ENCODE measurements at regions of chr10 and their contacts with region 1.

Region 1: DNA sequence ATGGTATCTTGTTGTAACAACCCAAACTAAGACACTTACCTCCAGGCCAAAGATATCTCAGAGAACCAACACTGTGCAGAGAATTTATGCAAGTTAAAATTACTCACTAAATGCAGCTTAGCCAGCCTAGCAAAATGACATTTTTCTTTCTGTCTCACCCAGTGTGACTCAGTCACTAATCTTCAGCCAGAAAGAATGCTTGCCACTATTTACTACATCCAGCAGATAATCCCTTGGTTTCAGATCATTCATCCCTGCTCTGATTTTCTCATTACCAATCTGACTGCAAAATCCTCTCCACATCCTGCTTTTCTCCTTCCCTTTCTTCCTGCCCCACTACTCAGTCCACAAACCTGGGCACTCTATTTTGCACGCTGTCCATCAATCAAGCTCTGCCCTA is 93.5 kb upstream of the NEBL start:
- DNase-seq: no peak
- ATAC-seq: peak in 1 of 2 experiments; percentile 22; a peak in 1 of 6 replicates
- H3K4me3 ChIP-seq: no peak overlapping the region
- H3K27ac ChIP-seq: no peak overlapping the region
- H3K4me1 ChIP-seq: peaks cover 16% of the 10 kb centered on the region; the same call in 2 of the 3 replicates
- CTCF ChIP-seq: no peak
- EP300 ChIP-seq: no peak
- POLR2A ChIP-seq: no peak
- RAD21 ChIP-seq: no peak

Region 2: GRCh38 chr10:20903635-20904390 is 86.8 kb before region 1 on chr10:
- CTCF ChIA-PET with region 1: no interaction called
- POLR2A ChIA-PET with region 1: interaction called, 10 read pairs
- DNase-seq: no peak
- ATAC-seq: no peak
- H3K4me3 ChIP-seq: no peak overlapping the region
- H3K27ac ChIP-seq: no peak overlapping the region
- H3K4me1 ChIP-seq: no peaks in the 10 kb centered on the region
- CTCF ChIP-seq: no peak
- EP300 ChIP-seq: no peak
- POLR2A ChIP-seq: no peak
- RAD21 ChIP-seq: no peak

Measured in A549 (cell line).